ENCODE measurements at regions of chr6 and their contacts with region 1.

Region 1: GRCh38 chr6:42093582-42094329 is 43.4 kb downstream of the TAF8 start:
- DNase-seq: no peak

Region 2: DNA sequence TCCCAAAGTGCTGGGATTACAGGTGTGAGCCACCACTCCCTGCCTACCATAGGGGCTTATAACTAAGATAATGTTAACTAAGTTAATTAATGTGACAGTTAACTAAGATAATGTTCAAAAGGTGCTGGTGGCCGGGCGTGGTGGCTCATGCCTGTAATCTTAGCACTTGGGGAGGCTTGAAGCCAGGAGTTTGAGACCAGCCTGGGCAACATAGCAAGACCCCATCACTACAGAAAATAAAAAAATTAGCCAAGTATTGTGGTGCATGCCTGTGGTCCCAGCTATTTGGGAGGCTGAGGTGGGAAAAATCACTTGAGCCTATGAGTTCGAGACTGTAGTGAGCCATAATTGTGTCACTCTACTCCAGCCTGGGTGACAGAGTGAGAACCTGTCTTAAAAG is 1044.5 kb after region 1 on chr6:
- intact Hi-C with region 1: loop called in 1 of 2 experiments (anchors 5 kb)
- DNase-seq: no peak

Measured in posterior vena cava (tissue), 2 donors.